ENCODE measurements at regions of chr1 and their contacts with region 1.

Region 1: DNA sequence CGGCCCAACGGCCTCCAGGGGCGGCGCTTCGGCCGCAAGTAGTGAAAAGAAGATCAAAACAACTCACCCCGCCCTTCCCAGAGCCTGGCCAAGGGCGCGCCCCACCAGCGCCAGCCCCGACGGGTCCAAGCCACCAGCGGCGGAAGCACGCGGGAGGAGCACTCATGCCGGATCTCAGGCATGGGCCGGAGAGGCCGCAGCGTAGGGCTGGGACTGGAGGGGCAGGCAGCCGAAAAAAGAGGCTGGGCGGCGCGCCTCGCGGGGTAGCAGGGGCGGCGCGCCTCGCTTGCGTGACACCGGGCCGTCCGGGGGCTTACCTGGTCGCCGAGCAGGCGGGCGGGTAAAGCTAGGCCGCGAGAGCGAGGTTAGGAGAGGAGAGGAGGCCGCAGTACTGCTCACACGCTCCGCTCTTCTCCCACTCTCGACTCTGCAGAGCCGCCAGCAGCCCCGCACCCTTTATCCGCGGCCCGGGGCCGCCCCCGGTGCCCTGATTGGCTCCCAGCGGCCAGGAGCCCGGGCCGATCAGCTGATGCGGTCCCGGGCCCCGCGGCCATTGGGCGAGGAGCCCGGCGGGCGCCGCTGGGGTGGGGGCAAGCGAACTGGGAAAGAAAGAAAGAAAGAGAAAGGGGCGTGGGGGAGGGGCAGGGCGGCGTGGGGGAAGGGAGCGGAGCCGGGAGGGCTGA is at the start of gene GLUL:
- DNase-seq: peak; percentile 96 to 97
- ATAC-seq: peak; percentile 94
- H3K4me3 ChIP-seq: peak within 1 kb of the TSS; percentile 87 to 96
- H3K27ac ChIP-seq: peak within 1 kb of the TSS; percentile 36 to 63
- H3K4me1 ChIP-seq: no peaks in the 10 kb centered on the region
- H3K27me3 ChIP-seq: no peaks in the 10 kb centered on the region
- total RNA-seq, gene GLUL: 421 to 549 TPM

Region 2: DNA sequence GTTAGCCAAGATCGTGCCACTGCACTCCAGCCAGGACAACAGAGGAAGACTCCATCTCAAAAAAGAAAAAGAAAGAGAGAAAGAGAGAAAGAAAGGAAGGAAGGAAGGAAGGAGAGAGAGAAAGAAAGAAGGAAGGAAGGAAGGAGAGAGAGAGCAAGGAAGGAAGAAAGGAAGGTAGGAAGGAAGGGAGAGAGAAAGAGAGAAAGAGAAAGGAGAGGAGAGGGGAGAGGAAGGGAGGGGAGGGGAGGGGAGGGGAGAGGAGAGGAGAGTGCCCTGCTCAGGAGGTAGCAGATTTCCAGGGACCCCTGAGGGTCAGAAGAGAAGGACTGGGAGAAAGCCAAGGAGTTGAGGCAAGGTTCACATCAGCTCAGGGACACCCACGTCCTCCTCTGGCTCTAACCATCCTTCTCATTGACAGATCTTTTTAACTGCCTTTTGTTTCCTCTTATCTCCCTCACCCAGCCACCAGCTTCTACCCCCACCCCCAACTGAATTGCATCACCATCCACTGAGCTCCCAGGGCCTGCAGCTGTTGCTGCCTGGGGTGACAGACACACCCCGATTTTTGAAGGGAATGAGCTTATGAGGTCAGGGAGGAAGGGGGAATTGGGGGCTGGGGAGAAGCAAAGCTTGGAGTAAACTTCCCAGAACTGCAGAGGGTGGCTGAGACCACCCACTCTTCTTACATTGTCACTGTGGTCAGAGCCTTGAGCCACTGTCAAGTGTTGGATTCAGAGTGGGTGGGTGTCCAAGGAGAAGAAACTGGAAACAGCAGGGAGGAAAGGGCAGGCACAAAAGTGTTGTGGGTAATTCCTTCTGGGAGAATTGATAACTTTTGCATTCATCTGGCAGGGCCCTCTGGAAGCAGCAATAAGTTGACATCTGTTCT is 91.5 kb before region 1 on chr1:
- intact Hi-C with region 1: loop called in 1 of 2 experiments (anchors 10 kb)
- DNase-seq: peak in 1 of 2 donors; percentile 68
- ATAC-seq: no peak
- H3K4me3 ChIP-seq: no peak overlapping the region
- H3K27ac ChIP-seq: no peak overlapping the region
- H3K4me1 ChIP-seq: peaks cover 0 to 3% of the 10 kb centered on the region in 2 donors
- H3K27me3 ChIP-seq: no peaks in the 10 kb centered on the region

Region 3: DNA sequence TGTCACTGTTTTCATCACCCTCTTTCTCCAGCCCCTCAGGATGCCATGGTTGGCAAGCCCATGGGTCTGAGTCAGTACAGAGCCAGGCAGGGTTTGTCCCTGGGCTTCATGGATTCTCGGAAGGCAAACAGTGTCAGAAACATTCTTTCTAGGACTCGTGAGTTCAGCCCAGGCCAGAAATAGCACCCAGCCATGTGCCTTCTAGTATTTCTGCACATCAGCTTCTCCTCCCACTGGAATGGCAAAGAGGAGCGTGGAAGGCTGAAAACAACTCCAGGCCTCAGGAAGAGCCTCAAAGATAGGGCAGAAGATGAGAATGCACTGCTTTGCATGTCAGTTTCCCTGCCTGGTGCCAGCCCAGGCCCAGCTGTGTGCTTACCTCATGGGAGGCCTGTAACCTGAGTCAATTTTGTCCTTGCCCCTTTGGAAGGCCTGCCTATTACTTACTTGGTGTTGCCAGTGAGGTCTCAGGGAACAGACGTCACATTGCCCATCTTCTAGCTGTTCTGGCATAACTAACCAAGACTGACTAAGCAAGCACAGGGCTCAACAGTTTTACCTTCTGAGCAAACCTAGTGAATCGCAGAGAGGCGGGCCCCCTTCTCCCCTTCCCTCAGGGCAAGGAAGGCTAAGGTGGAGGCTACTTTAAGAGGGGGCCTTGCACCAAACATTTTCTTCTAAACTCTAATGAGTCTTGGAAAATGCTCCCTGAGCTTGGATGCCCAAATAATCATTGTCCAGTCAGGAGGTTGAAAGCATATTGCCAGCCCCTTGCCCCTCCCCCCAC is 42.3 kb before region 1 on chr1:
- intact Hi-C with region 1: loop called in 1 of 2 experiments (anchors 2 kb)
- DNase-seq: peak; percentile 82 to 86
- ATAC-seq: peak; percentile 85
- H3K4me3 ChIP-seq: no peak overlapping the region
- H3K27ac ChIP-seq: peak overlapping the region in 1 of 2 donors; percentile 49
- H3K4me1 ChIP-seq: peaks cover 2 to 4% of the 10 kb centered on the region in 2 donors
- H3K27me3 ChIP-seq: no peaks in the 10 kb centered on the region

Region 4: DNA sequence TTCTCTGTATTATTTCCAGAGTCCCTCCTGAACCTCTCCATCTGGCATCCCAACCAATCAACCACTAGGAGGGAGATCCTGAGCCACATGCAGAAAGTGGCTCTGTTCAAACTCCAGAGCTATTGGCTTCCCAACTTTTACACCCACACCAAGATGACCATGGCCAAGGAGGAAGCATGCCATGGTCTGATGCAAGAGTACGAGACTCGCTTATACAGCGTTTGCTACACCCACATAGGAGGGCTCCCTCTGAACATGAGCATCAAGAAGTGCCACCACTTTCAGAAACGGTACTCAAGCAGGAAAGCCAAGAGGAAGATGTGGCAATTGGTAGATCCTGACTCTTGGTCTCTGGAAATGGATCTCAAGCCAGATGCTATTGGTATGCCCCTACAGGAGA is 82.1 kb after region 1 on chr1:
- intact Hi-C with region 1: no loop called
- DNase-seq: no peak
- ATAC-seq: no peak
- H3K4me3 ChIP-seq: no peak overlapping the region
- H3K27ac ChIP-seq: no peak overlapping the region
- H3K4me1 ChIP-seq: no peaks in the 10 kb centered on the region
- H3K27me3 ChIP-seq: peaks cover 0 to 3% of the 10 kb centered on the region in 2 donors

Measured in aorta (tissue), 5 donors.